ENCODE measurements at regions of chr9 and their contacts with region 1.

Region 1: DNA sequence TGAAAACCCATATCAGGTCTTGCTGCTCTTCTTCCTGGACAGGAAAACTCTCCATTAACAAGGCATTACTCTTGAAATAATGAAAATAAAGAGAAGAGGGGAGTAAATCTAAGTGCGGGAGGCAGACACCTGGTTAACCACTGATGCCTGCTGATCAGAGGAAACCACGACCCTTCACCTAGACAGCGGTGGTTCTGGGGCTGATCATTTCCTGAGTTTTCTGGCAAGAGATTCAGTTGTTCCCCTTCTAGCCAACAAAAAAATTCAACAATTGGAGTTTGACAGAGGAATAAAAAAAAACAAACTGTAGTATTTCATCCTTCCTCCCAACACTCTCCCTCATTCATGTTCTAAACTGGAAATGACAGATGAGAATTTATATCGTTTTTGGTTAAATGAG is 3.0 kb downstream of the RLN2 start:
- DNase-seq: peak; percentile 27
- H3K4me3 Mint-ChIP-seq: peak overlapping the region; percentile 6
- H3K27ac Mint-ChIP-seq: no peak overlapping the region
- H3K4me1 Mint-ChIP-seq: peaks cover 18% of the 10 kb centered on the region
- H3K27me3 Mint-ChIP-seq: no peaks in the 10 kb centered on the region

Region 2: GRCh38 chr9:5263351-5264218 is 38.0 kb before region 1 on chr9:
- CTCF ChIA-PET with region 1: no interaction called
- intact Hi-C with region 1: loop called (anchors 5 kb)
- DNase-seq: peak; percentile 11
- H3K4me3 Mint-ChIP-seq: no peak overlapping the region
- H3K27ac Mint-ChIP-seq: no peak overlapping the region
- H3K4me1 Mint-ChIP-seq: peaks cover 15% of the 10 kb centered on the region
- H3K27me3 Mint-ChIP-seq: no peaks in the 10 kb centered on the region

Region 3: DNA sequence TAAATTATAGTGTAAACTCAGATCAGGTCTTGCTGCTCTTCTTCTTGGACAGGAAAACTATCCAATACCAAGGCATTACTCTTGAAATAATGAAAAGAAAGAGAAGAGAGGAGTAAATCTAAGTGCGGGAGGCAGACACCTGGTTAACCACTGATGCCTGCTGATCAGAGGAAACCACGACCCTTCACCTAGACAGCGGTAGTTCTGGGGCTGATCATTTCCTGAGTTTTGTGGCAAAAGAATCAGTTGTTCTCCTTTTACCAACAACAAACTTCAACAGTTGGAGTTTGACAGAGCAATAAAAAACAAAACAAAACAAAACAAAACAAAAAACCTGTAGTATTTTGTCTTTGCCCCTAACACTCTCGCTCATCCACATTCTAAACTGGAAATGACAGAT is 35.1 kb after region 1 on chr9:
- CTCF ChIA-PET with region 1: no interaction called
- intact Hi-C with region 1: loop called (anchors 5 kb)
- DNase-seq: peak; percentile 42
- H3K4me3 Mint-ChIP-seq: peak overlapping the region; percentile 57
- H3K27ac Mint-ChIP-seq: no peak overlapping the region
- H3K4me1 Mint-ChIP-seq: peaks cover 39% of the 10 kb centered on the region
- H3K27me3 Mint-ChIP-seq: no peaks in the 10 kb centered on the region